Naive thymus-derived CD4-positive, alpha-beta T cell (primary cell): ENCODE measurements at regions of chr14 and their contacts with region 1.

Region 1: GRCh38 chr14:101707068-101707842 is 54.3 kb upstream of the PPP2R5C start:
- DNase-seq: peak; percentile 33 to 87 (median 79)
- ATAC-seq: peak; percentile 83
- H3K4me3 ChIP-seq: peak overlapping the region; percentile 8
- H3K4me3 Mint-ChIP-seq: peak overlapping the region; percentile 32 to 83 (median 75)
- H3K27ac ChIP-seq: peak overlapping the region; percentile 82
- H3K27ac Mint-ChIP-seq: peak overlapping the region; percentile 36 to 95 (median 90)
- H3K4me1 ChIP-seq: peaks cover 24 to 39% of the 10 kb centered on the region in 2 donors
- H3K4me1 Mint-ChIP-seq: peaks cover 17 to 48% (median 35%) of the 10 kb centered on the region in 7 donors
- H3K27me3 ChIP-seq: no peaks in the 10 kb centered on the region
- H3K27me3 Mint-ChIP-seq: peaks cover 0 to 25% (median 0%) of the 10 kb centered on the region in 5 donors

Region 2: GRCh38 chr14:101347893-101348777 is 359.1 kb before region 1 on chr14:
- CTCF ChIA-PET with region 1: no interaction called
- POLR2A ChIA-PET with region 1: no interaction called
- intact Hi-C with region 1: no loop called
- DNase-seq: no peak
- ATAC-seq: no peak
- H3K4me3 ChIP-seq: no peak overlapping the region
- H3K4me3 Mint-ChIP-seq: no peak overlapping the region
- H3K27ac ChIP-seq: no peak overlapping the region
- H3K27ac Mint-ChIP-seq: no peak overlapping the region
- H3K4me1 ChIP-seq: no peaks in the 10 kb centered on the region
- H3K4me1 Mint-ChIP-seq: no peaks in the 10 kb centered on the region
- H3K27me3 ChIP-seq: no peaks in the 10 kb centered on the region
- H3K27me3 Mint-ChIP-seq: peaks cover 3 to 31% (median 20%) of the 10 kb centered on the region in 5 donors

Region 3: GRCh38 chr14:101731187-101732080 is 24.2 kb after region 1 on chr14:
- CTCF ChIA-PET with region 1: interaction called, 20 read pairs
- POLR2A ChIA-PET with region 1: interaction called, 11 read pairs
- intact Hi-C with region 1: loop called (anchors 1 kb)
- DNase-seq: peak; percentile 37 to 90 (median 78)
- ATAC-seq: peak; percentile 96
- H3K4me3 ChIP-seq: peak overlapping the region; percentile 53
- H3K4me3 Mint-ChIP-seq: peak overlapping the region; percentile 79 to 95 (median 84)
- H3K27ac ChIP-seq: peak overlapping the region; percentile 82
- H3K27ac Mint-ChIP-seq: peak overlapping the region; percentile 93 to 99 (median 98)
- H3K4me1 ChIP-seq: peaks cover 26 to 36% of the 10 kb centered on the region in 2 donors
- H3K4me1 Mint-ChIP-seq: peaks cover 12 to 62% (median 47%) of the 10 kb centered on the region in 7 donors
- H3K27me3 ChIP-seq: no peaks in the 10 kb centered on the region
- H3K27me3 Mint-ChIP-seq: no peaks in the 10 kb centered on the region

Region 4: GRCh38 chr14:101774006-101774795 is 66.9 kb after region 1 on chr14:
- CTCF ChIA-PET with region 1: interaction called, 56 read pairs
- POLR2A ChIA-PET with region 1: interaction called, 15 read pairs
- intact Hi-C with region 1: loop called (anchors 1 to 2 kb)
- DNase-seq: no peak
- ATAC-seq: no peak
- H3K4me3 ChIP-seq: no peak overlapping the region
- H3K4me3 Mint-ChIP-seq: no peak overlapping the region
- H3K27ac ChIP-seq: no peak overlapping the region
- H3K27ac Mint-ChIP-seq: peak overlapping the region in 6 of 9 donors; percentile 14 to 70 (median 28)
- H3K4me1 ChIP-seq: no peaks in the 10 kb centered on the region
- H3K4me1 Mint-ChIP-seq: peaks cover 18 to 41% (median 35%) of the 10 kb centered on the region in 7 donors
- H3K27me3 ChIP-seq: no peaks in the 10 kb centered on the region
- H3K27me3 Mint-ChIP-seq: peaks cover 0 to 8% (median 0%) of the 10 kb centered on the region in 5 donors

Region 5: DNA sequence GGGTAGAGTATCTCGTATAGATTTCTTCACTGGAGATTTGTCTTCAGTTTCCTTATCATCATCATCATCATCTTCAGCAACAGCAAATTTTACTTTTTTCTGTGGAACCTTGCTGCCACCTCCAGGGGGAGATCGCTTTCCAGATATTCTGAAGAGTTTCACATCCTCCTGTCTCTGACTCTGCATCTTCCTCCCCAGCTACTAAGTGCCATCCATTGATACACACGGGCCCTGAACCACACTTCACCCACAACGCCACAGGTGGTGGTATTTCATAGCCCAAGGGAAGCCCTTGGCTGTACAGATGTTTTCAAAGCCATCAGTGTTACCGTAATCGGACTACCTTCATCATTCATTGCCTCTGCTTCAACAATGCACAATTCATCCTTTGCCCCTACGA is 136.4 kb after region 1 on chr14:
- CTCF ChIA-PET with region 1: interaction called, 17 read pairs
- POLR2A ChIA-PET with region 1: interaction called, 5 read pairs
- intact Hi-C with region 1: loop called (anchors 1 kb)
- DNase-seq: peak in 7 of 9 donors; percentile 54 to 70 (median 59)
- ATAC-seq: peak; percentile 88
- H3K4me3 ChIP-seq: no peak overlapping the region
- H3K4me3 Mint-ChIP-seq: peak overlapping the region in 9 of 10 donors; percentile 5 to 66 (median 56)
- H3K27ac ChIP-seq: peak overlapping the region; percentile 30
- H3K27ac Mint-ChIP-seq: peak overlapping the region; percentile 70 to 90 (median 84)
- H3K4me1 ChIP-seq: peaks cover 56 to 57% of the 10 kb centered on the region in 2 donors
- H3K4me1 Mint-ChIP-seq: peaks cover 67 to 99% (median 90%) of the 10 kb centered on the region in 7 donors
- H3K27me3 ChIP-seq: no peaks in the 10 kb centered on the region
- H3K27me3 Mint-ChIP-seq: no peaks in the 10 kb centered on the region

Region 6: GRCh38 chr14:101947906-101948665 is 240.8 kb after region 1 on chr14:
- CTCF ChIA-PET with region 1: interaction called, 5 read pairs
- POLR2A ChIA-PET with region 1: interaction called, 15 read pairs
- intact Hi-C with region 1: loop called (anchors 1 to 5 kb)
- DNase-seq: peak; percentile 95 to 100 (median 99)
- ATAC-seq: peak; percentile 97
- H3K4me3 ChIP-seq: peak overlapping the region; percentile 96
- H3K4me3 Mint-ChIP-seq: peak overlapping the region; percentile 86 to 99 (median 98)
- H3K27ac ChIP-seq: peak overlapping the region; percentile 99
- H3K27ac Mint-ChIP-seq: peak overlapping the region; percentile 97 to 100 (median 99)
- H3K4me1 ChIP-seq: peaks cover 9 to 10% of the 10 kb centered on the region in 2 donors
- H3K4me1 Mint-ChIP-seq: peaks cover 17 to 34% (median 25%) of the 10 kb centered on the region in 7 donors
- H3K27me3 ChIP-seq: no peaks in the 10 kb centered on the region
- H3K27me3 Mint-ChIP-seq: peaks cover 15 to 37% (median 30%) of the 10 kb centered on the region in 5 donors

Region 7: DNA sequence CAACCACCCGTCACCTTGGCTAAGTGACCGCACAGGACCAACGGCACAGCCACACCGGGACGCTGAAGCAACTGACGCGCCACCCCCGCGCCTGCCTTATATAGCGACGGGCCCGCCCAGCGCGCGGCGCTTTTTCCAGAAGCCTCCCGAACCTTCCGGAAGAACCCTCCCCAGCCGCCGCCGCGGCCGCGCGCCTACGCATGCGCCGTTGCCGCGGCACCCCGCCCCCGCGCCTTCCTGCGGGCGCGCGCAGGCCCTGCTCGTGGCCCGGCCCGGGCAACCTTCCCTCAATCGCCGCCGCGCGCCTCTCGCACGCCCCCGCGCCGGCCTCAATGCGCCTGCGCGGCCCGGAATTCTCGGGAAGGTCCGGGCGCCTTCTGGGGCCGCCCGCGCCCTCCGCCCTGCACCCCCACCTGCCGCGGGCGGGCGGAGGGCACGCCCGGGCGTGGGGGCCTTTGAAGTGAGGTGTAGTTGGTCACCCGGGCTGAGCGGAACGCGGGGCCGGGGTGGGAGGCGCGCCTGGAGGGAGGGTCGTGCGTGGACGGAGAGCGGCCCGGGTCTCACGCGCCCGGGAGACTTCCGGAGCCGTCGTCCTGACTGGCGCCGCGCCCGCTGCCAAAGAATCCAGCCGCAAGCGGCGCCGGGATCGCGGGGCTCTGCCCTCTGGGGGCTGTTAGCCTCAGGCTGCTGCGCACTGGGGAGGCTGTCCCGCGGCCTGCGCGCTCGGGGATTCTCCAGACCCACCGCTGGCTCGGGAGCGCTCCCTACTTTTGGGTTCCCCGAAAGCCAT is 379.9 kb after region 1 on chr14 and contains the start of gene HSP90AA1:
- CTCF ChIA-PET with region 1: no interaction called
- POLR2A ChIA-PET with region 1: no interaction called
- intact Hi-C with region 1: loop called (anchors 2 to 5 kb)
- DNase-seq: peak; percentile 89 to 99 (median 94)
- ATAC-seq: peak; percentile 87
- H3K4me3 ChIP-seq: peak within 1 kb of the TSS; percentile 91
- H3K4me3 Mint-ChIP-seq: peak within 1 kb of the TSS; percentile 90 to 98 (median 96)
- H3K27ac ChIP-seq: peak within 1 kb of the TSS; percentile 98
- H3K27ac Mint-ChIP-seq: peak within 1 kb of the TSS; percentile 93 to 98 (median 96)
- H3K4me1 ChIP-seq: peaks cover 41 to 43% of the 10 kb centered on the region in 2 donors
- H3K4me1 Mint-ChIP-seq: peaks cover 44 to 70% (median 62%) of the 10 kb centered on the region in 7 donors
- H3K27me3 ChIP-seq: no peaks in the 10 kb centered on the region
- H3K27me3 Mint-ChIP-seq: no peaks in the 10 kb centered on the region
- total RNA-seq, gene HSP90AA1: 229 to 591 (median 361) TPM

Region 8: DNA sequence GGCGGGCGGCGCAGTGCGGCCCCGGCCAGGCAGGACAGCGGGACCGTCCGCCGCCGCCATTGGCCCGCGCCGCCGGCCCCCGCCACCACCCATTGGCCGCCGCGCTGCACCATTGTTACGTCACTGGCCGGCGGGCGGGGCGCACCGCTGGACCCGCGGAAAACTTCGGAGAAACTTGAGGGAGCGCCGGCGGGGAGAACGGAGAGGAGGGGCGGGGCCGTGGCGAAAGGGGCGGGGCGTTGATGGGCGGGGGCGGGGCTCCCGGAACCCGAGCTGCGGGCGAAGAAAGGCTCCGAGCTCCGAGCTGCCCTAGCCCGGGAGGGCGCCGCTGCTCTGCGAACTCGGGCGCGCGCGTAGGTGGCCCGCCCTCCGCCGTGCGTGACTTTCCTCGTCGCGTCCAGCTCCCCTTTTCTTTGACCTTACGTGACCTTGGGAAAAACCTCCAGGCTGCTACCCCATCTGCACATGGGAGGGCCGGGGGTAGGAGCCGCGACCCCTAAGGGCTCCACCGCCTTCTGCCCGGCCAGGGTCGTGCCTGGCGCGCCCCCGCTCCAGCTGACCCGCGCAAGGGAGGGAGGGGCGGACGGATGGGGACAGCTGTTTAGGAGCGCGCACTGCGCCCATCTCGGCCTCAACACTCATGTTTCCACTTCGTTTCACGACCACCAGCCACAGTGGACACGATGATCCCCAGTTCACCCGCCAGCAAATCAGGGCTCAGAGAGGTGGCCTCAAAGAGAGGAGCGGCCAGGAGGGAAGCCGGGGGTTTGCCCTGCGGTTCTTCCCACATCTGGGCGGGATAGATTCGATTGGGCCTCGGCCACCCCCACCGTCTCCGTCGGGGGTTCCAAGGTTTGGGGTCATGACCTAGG is 802.7 kb after region 1 on chr14 and contains the start of gene ANKRD9:
- CTCF ChIA-PET with region 1: no interaction called
- POLR2A ChIA-PET with region 1: no interaction called
- intact Hi-C with region 1: loop called in 1 of 2 experiments (anchors 10 kb)
- DNase-seq: peak; percentile 48 to 94 (median 66)
- ATAC-seq: peak; percentile 83
- H3K4me3 ChIP-seq: peak within 1 kb of the TSS; percentile 75
- H3K4me3 Mint-ChIP-seq: peak within 1 kb of the TSS; percentile 85 to 91 (median 88)
- H3K27ac ChIP-seq: peak within 1 kb of the TSS; percentile 58
- H3K27ac Mint-ChIP-seq: peak within 1 kb of the TSS in 8 of 9 donors; percentile 20 to 74 (median 59)
- H3K4me1 ChIP-seq: peaks cover 4 to 14% of the 10 kb centered on the region in 2 donors
- H3K4me1 Mint-ChIP-seq: peaks cover 0 to 21% (median 10%) of the 10 kb centered on the region in 7 donors
- H3K27me3 ChIP-seq: no peaks in the 10 kb centered on the region
- H3K27me3 Mint-ChIP-seq: peaks cover 0 to 3% (median 0%) of the 10 kb centered on the region in 5 donors
- total RNA-seq, gene ANKRD9: 1.1 to 8.1 (median 2.2) TPM